CD14-positive monocyte (primary cell): ENCODE measurements at regions of chr22 and their contacts with region 1.

Region 1: GRCh38 chr22:40844951-40845350 is 11.5 kb downstream of the ST13 start:
- DNase-seq: no peak
- H3K4me3 ChIP-seq: no peak overlapping the region
- H3K4me3 Mint-ChIP-seq: no peak overlapping the region
- H3K27ac ChIP-seq: no peak overlapping the region
- H3K27ac Mint-ChIP-seq: no peak overlapping the region
- H3K4me1 ChIP-seq: no peaks in the 10 kb centered on the region
- H3K4me1 Mint-ChIP-seq: no peaks in the 10 kb centered on the region
- H3K27me3 ChIP-seq: no peaks in the 10 kb centered on the region
- H3K27me3 Mint-ChIP-seq: no peaks in the 10 kb centered on the region
- CTCF ChIP-seq: no peak

Region 2: DNA sequence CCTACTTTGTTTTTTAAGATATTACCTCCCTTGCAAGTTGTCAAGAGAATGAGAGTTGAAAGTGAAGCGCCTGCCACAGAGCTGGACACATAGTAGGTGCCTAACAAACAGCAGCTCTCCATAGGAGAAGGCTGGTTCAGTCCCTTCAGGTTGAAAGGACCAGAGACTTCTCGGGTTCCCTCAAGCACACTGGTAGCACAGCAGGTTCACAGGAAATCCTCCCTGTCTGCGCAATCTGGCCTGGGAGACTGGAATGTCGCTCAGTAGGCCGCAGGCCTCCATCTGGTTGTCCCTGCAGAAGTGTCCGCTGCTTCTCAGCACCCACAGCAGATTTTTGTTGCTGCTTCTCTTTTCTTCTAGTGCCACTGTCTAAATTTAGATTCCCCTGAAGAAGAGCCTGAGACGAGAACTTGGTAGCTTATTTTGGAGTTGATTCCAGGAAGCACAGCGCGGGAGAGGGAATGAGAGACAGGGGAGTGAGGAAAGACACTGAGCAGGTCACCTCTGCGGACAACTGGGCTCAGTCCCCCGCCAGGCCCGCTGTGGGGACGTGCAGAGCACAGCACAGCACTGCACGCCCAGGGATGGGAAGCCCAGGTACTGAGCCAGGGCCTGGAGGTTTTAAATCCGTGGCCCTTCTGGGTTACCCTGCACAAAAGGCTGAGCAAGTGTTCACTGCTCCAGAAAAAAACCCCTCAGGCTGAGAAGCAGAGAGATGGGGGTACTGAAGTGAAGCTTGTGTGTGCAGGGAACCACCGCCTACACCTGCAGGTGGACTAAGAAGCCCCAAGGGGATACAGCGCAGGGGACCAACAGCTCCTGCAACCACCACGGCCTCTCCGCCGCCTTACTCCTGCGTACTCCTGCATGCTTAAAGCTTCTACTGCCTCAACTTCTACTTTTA is 137.8 kb after region 1 on chr22:
- intact Hi-C with region 1: no loop called
- DNase-seq: no peak
- H3K4me3 ChIP-seq: no peak overlapping the region
- H3K4me3 Mint-ChIP-seq: no peak overlapping the region
- H3K27ac ChIP-seq: no peak overlapping the region
- H3K27ac Mint-ChIP-seq: peak overlapping the region in 1 of 7 donors; percentile 62
- H3K4me1 ChIP-seq: no peaks in the 10 kb centered on the region
- H3K4me1 Mint-ChIP-seq: peaks cover 2% of the 10 kb centered on the region
- H3K27me3 ChIP-seq: no peaks in the 10 kb centered on the region
- H3K27me3 Mint-ChIP-seq: peaks cover 0 to 9% (median 2%) of the 10 kb centered on the region in 3 donors
- CTCF ChIP-seq: no peak

Region 3: DNA sequence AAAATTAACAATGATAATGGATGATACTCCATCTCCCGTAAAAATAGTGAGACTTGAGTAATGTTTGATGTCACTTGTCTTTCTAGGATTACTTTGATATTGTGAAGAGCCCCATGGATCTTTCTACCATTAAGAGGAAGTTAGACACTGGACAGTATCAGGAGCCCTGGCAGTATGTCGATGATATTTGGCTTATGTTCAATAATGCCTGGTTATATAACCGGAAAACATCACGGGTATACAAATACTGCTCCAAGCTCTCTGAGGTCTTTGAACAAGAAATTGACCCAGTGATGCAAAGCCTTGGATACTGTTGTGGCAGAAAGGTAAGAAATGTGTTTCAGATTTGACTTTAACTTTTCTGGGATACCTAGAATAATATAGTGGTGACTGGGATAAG is 312.1 kb after region 1 on chr22:
- intact Hi-C with region 1: loop called in 1 of 2 experiments (anchors 10 kb)
- DNase-seq: no peak
- H3K4me3 ChIP-seq: no peak overlapping the region
- H3K4me3 Mint-ChIP-seq: no peak overlapping the region
- H3K27ac ChIP-seq: peak overlapping the region in 1 of 2 donors; percentile 3
- H3K27ac Mint-ChIP-seq: peak overlapping the region in 1 of 7 donors; percentile 37
- H3K4me1 ChIP-seq: no peaks in the 10 kb centered on the region
- H3K4me1 Mint-ChIP-seq: no peaks in the 10 kb centered on the region
- H3K27me3 ChIP-seq: no peaks in the 10 kb centered on the region
- H3K27me3 Mint-ChIP-seq: no peaks in the 10 kb centered on the region
- CTCF ChIP-seq: no peak